Esophagus muscularis mucosa (tissue), 4 donors: ENCODE measurements at regions of chr11 and their contacts with region 1.

Region 1: GRCh38 chr11:126062679-126063506 is at the start of gene CDON:
- DNase-seq: peak; percentile 96
- H3K4me3 ChIP-seq: peak within 1 kb of the TSS; percentile 74 to 100 (median 96)
- H3K27ac ChIP-seq: peak within 1 kb of the TSS; percentile 88 to 91 (median 90)
- H3K4me1 ChIP-seq: peaks cover 11 to 52% (median 49%) of the 10 kb centered on the region in 4 donors
- H3K27me3 ChIP-seq: no peaks in the 10 kb centered on the region
- CTCF ChIP-seq: peak; percentile 13 to 32 (median 19)
- EP300 ChIP-seq: no peak
- POLR2A ChIP-seq: peak; percentile 16
- total RNA-seq, gene CDON: 16.6 to 42.7 (median 28.1) TPM

Region 2: DNA sequence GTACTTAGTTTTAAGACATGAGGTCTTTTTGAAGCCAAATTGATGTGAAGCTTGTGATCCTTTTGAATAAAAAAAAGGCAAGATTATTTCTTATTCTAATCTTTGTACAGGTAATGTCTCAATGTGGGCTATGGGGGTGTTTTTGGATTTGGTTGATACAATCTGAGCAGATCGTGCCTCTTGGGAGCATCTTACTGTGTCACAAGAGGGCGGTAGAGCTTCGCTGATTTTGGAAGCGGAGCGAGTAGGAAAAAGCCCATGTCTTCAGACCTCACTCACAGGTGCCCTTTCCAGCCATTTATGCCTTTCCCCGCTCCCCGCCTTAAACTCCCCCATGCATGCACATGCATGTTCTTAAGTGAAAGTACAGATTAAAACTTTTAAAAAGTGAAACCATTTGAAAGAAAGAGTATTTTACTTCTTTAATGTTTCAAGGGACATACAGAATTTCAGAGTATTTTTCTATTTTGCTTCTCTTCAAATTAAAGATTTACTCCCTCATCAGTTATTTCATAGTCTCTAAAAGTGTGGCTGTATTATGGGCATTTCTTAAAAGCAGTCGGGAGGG is 139.8 kb before region 1 on chr11:
- intact Hi-C with region 1: loop called (anchors 5 kb)
- DNase-seq: peak; percentile 91
- H3K4me3 ChIP-seq: no peak overlapping the region
- H3K27ac ChIP-seq: no peak overlapping the region
- H3K4me1 ChIP-seq: peaks cover 0 to 7% (median 3%) of the 10 kb centered on the region in 4 donors
- H3K27me3 ChIP-seq: peaks cover 0 to 16% (median 0%) of the 10 kb centered on the region in 4 donors
- CTCF ChIP-seq: peak; percentile 78 to 88 (median 82)
- EP300 ChIP-seq: no peak
- POLR2A ChIP-seq: no peak

Region 3: DNA sequence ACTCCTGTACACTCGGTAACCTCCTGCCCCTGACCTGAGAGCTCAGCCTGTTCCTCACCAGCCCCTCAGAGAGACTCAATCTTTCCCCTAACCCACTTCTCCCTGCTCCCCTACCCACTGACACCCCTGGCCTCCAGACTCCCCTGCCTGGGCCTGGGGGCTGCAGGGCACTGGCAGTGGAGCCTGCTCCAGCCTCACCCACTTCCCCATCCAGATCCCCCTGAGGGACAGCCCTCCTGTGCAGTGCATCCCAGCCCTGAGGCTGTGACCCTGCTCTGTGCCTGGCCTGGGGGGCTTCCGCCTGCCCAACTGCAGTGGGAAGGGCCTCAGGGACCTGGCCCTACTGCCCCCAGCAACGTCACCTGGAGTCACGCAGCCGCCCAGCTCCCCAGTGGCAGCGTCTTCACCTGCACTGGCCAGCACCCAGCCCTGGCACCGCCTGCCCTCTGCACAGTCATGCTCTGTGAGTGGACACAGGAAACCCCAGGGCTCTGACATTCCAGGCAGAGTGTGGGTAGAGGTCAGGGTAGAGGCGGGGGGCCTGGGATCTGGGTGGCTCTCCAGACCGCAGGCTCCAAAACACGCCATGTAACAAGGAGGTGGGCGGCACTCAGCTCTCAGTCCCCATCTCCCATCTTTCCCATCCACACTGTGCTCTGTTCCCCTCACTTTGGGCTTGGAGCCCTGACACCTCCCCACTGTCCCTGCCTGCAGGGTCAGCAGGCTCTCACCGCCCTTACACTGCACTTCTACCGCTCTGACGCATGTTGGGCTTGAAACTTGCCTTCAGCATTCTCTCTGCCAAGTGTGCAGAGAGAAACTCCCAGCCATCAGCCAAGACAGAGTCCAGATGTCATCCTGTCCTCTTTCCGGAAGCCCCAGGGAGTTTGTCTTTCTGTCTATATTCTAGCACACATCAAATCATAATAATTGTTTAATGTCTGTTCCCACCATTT is 111.9 kb before region 1 on chr11:
- intact Hi-C with region 1: loop called (anchors 5 kb)
- DNase-seq: peak; percentile 91
- H3K4me3 ChIP-seq: no peak overlapping the region
- H3K27ac ChIP-seq: peak overlapping the region; percentile 46 to 65 (median 54)
- H3K4me1 ChIP-seq: peaks cover 19 to 37% (median 32%) of the 10 kb centered on the region in 4 donors
- H3K27me3 ChIP-seq: no peaks in the 10 kb centered on the region
- CTCF ChIP-seq: no peak
- EP300 ChIP-seq: no peak
- POLR2A ChIP-seq: no peak

Region 4: GRCh38 chr11:126113515-126113957 is 50.6 kb after region 1 on chr11:
- intact Hi-C with region 1: loop called (anchors 5 kb)
- DNase-seq: no peak
- H3K4me3 ChIP-seq: no peak overlapping the region
- H3K27ac ChIP-seq: peak overlapping the region; percentile 82 to 88 (median 86)
- H3K4me1 ChIP-seq: peaks cover 56 to 74% (median 66%) of the 10 kb centered on the region in 4 donors
- H3K27me3 ChIP-seq: no peaks in the 10 kb centered on the region
- CTCF ChIP-seq: peak in 1 of 3 experiments; percentile 18
- EP300 ChIP-seq: no peak
- POLR2A ChIP-seq: no peak

Region 5: DNA sequence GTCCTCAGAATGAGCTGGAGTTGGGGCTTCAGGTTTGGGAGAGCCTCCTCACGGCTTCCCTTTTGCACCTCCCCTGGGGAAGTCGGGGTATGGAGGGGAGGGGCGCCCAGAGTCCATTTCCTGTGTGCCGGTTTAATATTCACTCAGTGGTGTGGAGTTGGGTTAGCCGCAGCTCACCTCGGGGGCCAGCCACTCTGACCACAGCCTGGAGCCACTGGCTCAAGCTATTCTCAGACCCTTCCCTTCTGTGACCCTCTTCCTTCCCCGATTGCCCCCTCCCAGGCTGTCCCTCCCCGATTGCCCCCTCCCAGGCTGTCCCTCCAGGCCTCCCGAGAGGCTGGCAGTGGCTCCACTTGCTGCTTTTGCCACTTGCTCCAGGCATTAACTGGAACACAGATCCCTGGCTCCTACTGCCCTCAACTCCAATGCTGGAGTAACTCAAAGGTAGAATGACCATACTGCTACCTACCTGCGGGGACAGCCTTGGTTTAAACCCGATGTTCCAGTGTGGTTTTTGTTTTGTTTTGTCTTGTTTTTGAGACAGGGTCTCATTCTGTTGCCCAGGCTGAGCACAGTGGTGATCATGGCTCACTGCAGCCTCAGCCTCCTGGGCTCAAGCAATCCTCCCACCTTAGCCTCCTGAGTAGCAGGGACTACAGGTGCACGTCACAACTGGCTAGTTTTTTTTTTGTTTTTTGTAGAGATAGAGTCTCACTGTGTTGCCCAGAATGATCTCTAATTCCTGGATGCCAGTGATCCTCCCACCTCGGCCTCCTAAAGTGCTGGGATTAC is 119.2 kb after region 1 on chr11:
- intact Hi-C with region 1: no loop called
- DNase-seq: no peak
- H3K4me3 ChIP-seq: no peak overlapping the region
- H3K27ac ChIP-seq: no peak overlapping the region
- H3K4me1 ChIP-seq: peaks cover 0 to 11% (median 2%) of the 10 kb centered on the region in 4 donors
- H3K27me3 ChIP-seq: no peaks in the 10 kb centered on the region
- CTCF ChIP-seq: no peak
- EP300 ChIP-seq: no peak
- POLR2A ChIP-seq: no peak

Region 6: DNA sequence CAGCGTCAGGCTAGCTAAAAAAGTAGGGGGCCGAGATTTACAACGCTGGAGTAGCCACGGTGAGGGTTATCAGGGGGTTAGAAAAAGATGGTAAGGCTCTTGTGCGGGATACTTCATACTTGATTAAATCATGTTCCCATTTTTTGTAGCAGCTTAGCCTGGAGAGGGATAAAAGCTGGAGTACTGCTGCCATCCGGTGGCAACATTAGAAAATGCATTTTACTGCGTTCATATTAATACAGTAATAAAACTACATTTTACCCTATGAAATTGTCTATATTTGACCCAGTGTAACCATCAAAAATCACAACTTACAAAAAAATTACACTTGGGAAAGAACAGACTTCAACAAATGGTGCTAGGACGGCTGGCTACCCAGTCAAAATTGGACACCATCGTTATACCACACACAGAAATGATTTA is 131.2 kb after region 1 on chr11:
- intact Hi-C with region 1: loop called (anchors 5 kb)
- DNase-seq: no peak
- H3K4me3 ChIP-seq: no peak overlapping the region
- H3K27ac ChIP-seq: no peak overlapping the region
- H3K4me1 ChIP-seq: peaks cover 0 to 18% (median 14%) of the 10 kb centered on the region in 4 donors
- H3K27me3 ChIP-seq: no peaks in the 10 kb centered on the region
- CTCF ChIP-seq: peak; percentile 72 to 79 (median 76)
- EP300 ChIP-seq: no peak
- POLR2A ChIP-seq: no peak